Heart right ventricle (tissue), 16 donors: ENCODE measurements at regions of chr9 and their contacts with region 1.

Region 1: GRCh38 chr9:83219152-83219923 is 156.4 kb upstream of the RASEF start:
- DNase-seq: peak; percentile 81 to 87
- ATAC-seq: peak; percentile 95 to 98 (median 97)
- H3K4me3 ChIP-seq: peak overlapping the region; percentile 31 to 77 (median 63)
- H3K27ac ChIP-seq: peak overlapping the region; percentile 20 to 84 (median 74)
- H3K4me1 ChIP-seq: peaks cover 0 to 29% (median 23%) of the 10 kb centered on the region in 9 donors
- H3K27me3 ChIP-seq: no peaks in the 10 kb centered on the region
- CTCF ChIP-seq: peak; percentile 47 to 84 (median 71)

Region 2: DNA sequence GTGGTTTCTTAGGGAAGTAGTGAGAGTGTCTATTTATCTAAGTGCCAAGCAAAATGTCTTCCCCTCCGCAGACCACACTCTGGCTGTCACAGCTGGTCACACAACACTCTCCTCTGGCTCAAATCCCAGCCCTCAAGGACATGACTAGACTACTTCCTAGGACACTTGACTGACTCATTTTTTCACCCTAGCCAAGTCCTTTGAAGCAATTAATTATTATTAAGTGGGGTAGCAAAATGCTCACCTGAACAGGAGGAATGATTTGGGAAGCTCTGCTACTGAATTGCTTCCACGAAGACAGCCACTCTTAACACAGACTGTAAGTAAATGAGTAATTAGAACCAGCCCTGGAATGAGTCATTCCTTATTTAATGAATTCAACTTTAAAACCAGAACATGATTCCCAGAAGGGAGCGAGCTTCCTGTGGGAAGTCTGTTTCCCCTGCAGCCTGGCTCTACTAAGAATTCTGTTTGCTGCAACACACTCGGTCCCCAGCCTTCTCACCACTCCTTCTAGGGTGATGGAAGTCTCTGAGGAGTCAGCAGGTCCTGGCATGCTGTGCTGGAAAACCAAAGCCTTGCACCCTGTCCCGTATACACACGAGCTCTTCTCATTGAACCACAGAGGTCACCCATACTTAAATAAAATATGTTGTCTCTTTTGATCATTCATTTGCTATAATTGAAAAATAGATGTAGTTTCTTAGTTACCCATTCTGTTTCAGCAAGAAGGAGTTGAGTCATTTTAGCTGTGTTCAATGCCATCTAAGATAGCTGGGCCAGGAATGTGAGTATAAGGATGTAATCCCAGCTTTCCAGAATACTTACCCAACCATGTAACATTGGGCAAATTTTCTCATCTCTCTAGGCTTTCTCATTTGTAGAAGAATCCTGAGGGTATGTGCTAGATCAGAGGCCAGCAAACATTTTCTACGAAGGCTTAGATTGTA is 62.2 kb after region 1 on chr9:
- intact Hi-C with region 1: loop called in 1 of 10 experiments (anchors 10 kb)
- DNase-seq: peak in 1 of 2 donors; percentile 56
- ATAC-seq: peak; percentile 68 to 91 (median 78)
- H3K4me3 ChIP-seq: no peak overlapping the region
- H3K27ac ChIP-seq: peak overlapping the region in 8 of 10 donors; percentile 34 to 75 (median 65)
- H3K4me1 ChIP-seq: peaks cover 6 to 27% (median 22%) of the 10 kb centered on the region in 9 donors
- H3K27me3 ChIP-seq: no peaks in the 10 kb centered on the region
- CTCF ChIP-seq: no peak

Region 3: DNA sequence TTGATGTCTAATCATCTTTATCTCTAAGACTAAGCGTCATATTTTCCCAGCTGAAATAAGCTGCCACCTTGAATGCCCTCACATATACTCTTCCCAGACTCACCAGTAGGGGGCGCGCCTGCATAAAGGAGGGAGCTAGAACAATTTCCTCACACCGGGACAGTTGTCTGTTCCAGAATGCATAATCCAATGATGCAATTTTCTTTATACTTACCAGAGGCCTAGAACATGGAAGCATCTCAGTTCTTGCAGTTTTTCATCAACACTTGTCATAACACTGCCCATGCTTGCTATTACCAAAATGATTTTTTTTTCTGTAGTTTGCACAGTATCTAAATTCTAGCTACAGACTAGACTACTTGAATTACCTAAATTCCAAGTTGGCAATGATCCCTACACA is 115.0 kb after region 1 on chr9:
- intact Hi-C with region 1: loop called in 8 of 10 experiments (anchors 1 to 10 kb)
- DNase-seq: peak; percentile 84 to 85
- ATAC-seq: peak; percentile 79 to 94 (median 92)
- H3K4me3 ChIP-seq: no peak overlapping the region
- H3K27ac ChIP-seq: no peak overlapping the region
- H3K4me1 ChIP-seq: peaks cover 0 to 6% (median 0%) of the 10 kb centered on the region in 9 donors
- H3K27me3 ChIP-seq: no peaks in the 10 kb centered on the region
- CTCF ChIP-seq: peak; percentile 90 to 98 (median 95)

Region 4: GRCh38 chr9:83544002-83544698 is 324.8 kb after region 1 on chr9:
- intact Hi-C with region 1: loop called in 9 of 10 experiments (anchors 1 to 10 kb)
- DNase-seq: peak; percentile 36 to 39
- ATAC-seq: peak; percentile 83 to 94 (median 87)
- H3K4me3 ChIP-seq: no peak overlapping the region
- H3K27ac ChIP-seq: no peak overlapping the region
- H3K4me1 ChIP-seq: peaks cover 0 to 15% (median 5%) of the 10 kb centered on the region in 9 donors
- H3K27me3 ChIP-seq: no peaks in the 10 kb centered on the region
- CTCF ChIP-seq: peak; percentile 59 to 82 (median 78)

Region 5: GRCh38 chr9:83596896-83597504 is 377.7 kb after region 1 on chr9:
- intact Hi-C with region 1: loop called in 3 of 10 experiments (anchors 2 to 10 kb)
- DNase-seq: peak in 1 of 2 donors; percentile 32
- ATAC-seq: peak in 2 of 8 donors; percentile 42 to 55
- H3K4me3 ChIP-seq: no peak overlapping the region
- H3K27ac ChIP-seq: no peak overlapping the region
- H3K4me1 ChIP-seq: peaks cover 0 to 11% (median 0%) of the 10 kb centered on the region in 9 donors
- H3K27me3 ChIP-seq: no peaks in the 10 kb centered on the region
- CTCF ChIP-seq: peak; percentile 51 to 80 (median 66)